Head of caudate nucleus (tissue), 42 donors: ENCODE measurements at regions of chr6 and their contacts with region 1.

Region 1: GRCh38 chr6:50602292-50602691 is 111.0 kb upstream of the TFAP2D start:
- DNase-seq: peak in 6 of 42 donors; percentile 5 to 43 (median 13)

Region 2: GRCh38 chr6:50128420-50129005 is 473.8 kb before region 1 on chr6:
- intact Hi-C with region 1: loop called (anchors 10 kb)
- DNase-seq: no peak

Region 3: DNA sequence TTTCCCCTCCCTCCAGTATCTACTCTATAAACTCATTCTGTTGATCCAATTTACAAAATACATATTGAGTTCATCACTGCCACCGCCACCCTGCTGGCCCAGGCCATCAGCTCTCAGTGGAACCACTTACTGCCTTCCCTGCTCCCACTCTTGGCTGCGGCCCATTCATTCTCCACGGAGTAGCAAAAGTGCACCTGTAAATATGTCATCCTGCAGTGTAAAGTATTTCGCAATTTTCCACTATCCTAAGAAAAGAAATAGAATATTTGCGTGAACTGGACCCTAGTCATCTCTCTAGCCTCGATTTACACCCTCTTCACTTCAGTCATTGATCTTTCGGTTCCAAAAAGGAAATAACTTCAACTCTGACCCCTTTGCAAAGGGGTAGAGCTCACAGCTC is 147.3 kb before region 1 on chr6:
- intact Hi-C with region 1: no loop called
- DNase-seq: no peak

Region 4: DNA sequence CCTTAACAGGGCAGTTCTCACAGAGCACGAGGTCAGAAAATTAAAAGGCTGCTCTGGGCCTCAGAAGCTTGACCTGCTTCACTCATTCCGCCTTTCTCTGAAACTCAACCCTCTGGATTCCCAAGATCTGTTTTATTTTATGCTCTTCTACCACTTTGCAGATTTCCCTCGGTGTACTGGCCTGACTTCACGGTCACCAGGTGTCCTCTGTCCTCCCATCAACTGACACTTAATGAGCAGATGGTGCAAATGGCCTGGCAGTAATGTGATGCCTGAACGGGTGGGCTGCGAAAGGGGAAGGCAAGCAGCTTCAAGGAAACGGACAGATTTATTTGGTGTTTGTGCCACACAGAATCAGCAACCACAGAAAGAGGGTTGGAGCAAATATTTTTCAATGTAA is 58.6 kb before region 1 on chr6:
- intact Hi-C with region 1: no loop called
- DNase-seq: no peak

Region 5: DNA sequence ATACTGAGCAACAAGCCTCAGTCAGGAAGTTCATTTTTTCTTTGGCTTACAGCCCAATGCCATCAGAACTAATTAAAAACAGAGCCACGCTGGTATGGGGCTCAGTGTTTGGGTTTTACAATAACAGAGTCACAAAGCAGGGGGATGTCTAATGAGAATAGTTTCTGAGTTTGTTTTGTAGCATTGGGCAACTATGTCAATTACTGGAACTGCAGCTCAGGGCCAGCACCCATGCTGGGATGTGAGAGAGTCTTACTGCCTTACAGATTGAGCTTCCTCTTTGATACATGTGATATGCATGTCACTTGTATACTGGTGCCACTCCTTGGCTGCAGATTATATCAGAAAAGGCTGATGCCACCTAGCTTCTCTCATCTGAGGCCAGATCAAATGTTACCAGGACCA is 334.0 kb after region 1 on chr6:
- intact Hi-C with region 1: no loop called
- DNase-seq: peak in 2 of 42 donors; percentile 2 to 4